Mammary epithelial cell (primary cell): ENCODE measurements at regions of chr2 and their contacts with region 1.

Region 1: DNA sequence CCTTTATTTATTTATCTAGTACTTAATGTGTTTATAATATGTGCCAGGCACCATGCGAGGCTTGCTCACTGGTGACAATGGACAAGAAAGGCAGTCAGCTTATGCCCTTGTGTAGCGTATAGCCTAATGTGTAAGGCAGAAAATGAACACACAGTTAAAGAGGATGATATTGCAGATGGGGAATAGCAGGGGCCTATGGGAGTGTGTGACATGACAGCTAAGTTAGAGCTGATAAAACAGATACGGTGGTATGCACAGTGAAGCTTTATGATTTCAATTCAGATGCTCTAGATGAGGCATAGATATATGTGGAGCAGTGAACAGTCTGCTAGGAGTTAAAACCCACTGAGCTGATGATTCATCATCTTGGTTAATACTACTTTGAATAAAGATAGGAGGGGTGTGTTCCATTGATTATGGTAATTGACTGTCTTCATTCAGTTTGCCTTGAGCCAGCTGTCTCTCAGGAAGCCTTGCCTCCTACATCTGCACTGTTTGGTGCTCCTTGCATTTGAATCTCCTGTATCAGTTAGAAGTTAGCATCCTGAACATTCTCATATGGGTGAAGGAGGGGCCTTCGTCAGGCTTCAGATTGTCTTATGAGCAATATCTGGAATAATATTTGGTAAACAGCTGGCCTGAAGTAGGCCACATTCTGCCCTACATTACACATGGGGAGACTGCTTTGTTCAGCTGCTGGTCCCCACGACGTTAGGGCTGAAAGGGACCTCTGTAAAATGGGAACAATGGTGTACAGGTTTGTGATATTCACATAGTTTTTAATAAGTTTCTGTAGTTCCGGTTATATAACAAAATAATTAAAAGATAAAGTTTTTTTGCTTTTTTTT is 13.2 kb downstream of the MAP4K4 start:
- DNase-seq: peak; percentile 46
- H3K4me3 ChIP-seq: no peak overlapping the region
- H3K27ac ChIP-seq: no peak overlapping the region
- H3K4me1 ChIP-seq: peaks cover 36% of the 10 kb centered on the region
- H3K27me3 ChIP-seq: no peaks in the 10 kb centered on the region
- CTCF ChIP-seq: no peak

Region 2: DNA sequence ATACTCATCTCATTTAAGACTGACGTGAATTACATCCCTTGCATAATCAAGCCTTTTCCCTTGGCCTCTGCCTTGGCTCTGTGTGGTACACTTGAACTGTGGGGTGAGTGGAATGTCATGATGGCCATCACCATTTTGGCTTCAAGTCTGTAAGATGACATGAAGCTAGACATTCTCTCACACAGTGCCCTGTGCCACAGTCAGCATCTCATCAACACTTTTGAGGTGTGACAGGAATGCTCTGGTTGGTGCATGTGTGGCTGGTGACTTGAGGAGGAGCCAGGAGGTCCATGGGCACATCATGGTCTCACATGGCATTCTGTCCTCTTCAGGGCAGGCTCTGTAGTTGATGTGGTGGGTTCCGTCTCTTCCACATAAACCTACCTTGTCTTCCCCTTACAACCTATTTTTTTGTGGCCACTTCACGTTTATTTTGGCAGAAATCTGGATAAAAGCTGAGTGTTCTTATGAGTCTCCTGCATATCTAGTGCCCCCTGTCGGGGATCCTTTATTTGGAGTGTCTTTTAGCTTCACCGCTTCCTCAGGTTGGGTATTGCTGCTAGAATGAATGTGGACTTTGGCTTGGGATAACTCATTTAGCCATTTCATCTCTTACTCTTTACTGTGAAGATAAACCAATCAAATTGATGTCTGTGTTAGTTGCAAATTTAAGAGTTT is 15.0 kb after region 1 on chr2:
- CTCF ChIA-PET with region 1: no interaction called
- dilution Hi-C with region 1: no loop called
- in situ Hi-C with region 1: no loop called
- intact Hi-C with region 1: loop called (anchors 2 kb)
- DNase-seq: no peak
- H3K4me3 ChIP-seq: no peak overlapping the region
- H3K27ac ChIP-seq: no peak overlapping the region
- H3K4me1 ChIP-seq: peaks cover 19% of the 10 kb centered on the region
- H3K27me3 ChIP-seq: no peaks in the 10 kb centered on the region
- CTCF ChIP-seq: no peak

Region 3: DNA sequence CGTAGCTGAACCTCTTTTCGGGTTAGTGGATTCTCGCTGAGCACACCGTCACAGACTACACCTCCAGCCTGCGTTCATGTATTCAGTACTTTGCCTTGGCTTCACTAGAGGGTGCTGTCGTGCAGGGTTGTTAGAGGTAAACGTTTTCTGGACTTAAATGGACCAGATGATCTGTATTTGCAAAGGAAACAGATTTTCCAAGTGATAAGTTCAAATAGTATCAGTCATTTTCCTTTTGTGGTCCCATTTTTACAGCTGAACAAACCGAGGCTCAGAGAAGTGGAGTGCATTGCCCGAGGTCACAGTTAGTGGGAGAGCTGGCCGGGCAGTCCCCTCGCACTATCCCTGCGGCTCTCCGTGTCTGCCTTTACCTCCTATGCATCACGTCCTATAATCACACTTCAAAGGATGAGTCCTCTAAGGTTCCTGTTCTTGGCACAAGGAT is 112.7 kb after region 1 on chr2:
- CTCF ChIA-PET with region 1: no interaction called
- dilution Hi-C with region 1: no loop called
- in situ Hi-C with region 1: no loop called
- intact Hi-C with region 1: no loop called
- DNase-seq: peak; percentile 75
- H3K4me3 ChIP-seq: peak overlapping the region in 2 of 3 experiments; percentile 3 to 4
- H3K27ac ChIP-seq: peak overlapping the region; percentile 88
- H3K4me1 ChIP-seq: peaks cover 81% of the 10 kb centered on the region
- H3K27me3 ChIP-seq: no peaks in the 10 kb centered on the region
- CTCF ChIP-seq: peak; percentile 79 to 86